CD4-positive, alpha-beta T cell (primary cell): ENCODE measurements at regions of chr11 and their contacts with region 1.

Region 1: DNA sequence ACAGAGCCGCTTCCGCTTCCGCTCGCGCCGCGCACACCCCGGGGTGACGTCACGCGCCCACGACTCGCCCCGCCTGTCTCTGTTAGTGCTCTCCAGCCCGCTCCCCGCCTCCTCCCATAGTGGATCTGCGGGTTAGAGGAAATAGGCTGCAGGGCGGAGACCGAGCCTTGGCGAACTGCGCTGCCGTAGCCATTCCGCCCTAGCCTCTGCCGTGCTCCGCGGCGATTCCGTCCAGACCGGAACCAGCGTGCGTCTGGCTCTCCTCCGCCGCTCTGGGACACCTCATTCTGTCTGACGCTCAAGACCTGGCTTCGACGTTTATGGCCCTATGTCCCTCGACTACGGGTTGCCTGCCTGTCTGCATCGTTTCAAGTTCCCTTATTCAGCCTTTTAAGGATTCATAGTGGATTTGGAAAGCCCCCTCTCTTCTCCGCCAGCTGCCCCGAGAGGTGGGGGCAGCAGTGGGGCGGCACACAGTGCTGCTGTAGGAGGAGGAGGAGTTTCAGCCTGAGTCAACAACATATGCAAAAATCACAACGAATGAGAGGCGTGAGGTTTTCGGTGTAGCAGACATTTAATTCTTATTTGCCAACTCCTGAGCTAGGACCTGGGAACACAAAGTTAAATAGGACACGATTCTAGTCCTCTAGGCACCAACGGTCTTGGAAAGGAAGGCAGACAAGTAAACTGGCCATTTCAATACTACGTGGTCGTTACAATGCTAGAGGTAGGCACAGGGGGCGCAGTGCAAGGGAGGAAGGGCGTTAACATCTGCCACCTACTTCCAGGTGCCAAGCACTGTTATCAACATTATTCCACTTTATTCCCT is at the start of gene TAF10:
- DNase-seq: peak; percentile 88 to 98 (median 95)
- ATAC-seq: peak; percentile 86
- H3K4me3 ChIP-seq: peak within 1 kb of the TSS; percentile 90
- H3K4me3 Mint-ChIP-seq: peak within 1 kb of the TSS; percentile 92
- H3K27ac ChIP-seq: peak within 1 kb of the TSS; percentile 96 to 98
- H3K27ac Mint-ChIP-seq: no peak within 1 kb of the TSS
- H3K4me1 ChIP-seq: peaks cover 63% of the 10 kb centered on the region
- H3K4me1 Mint-ChIP-seq: peaks cover 35% of the 10 kb centered on the region
- H3K27me3 ChIP-seq: no peaks in the 10 kb centered on the region
- H3K27me3 Mint-ChIP-seq: no peaks in the 10 kb centered on the region
- CTCF ChIP-seq: peak; percentile 47
- total RNA-seq, gene TAF10: 154 to 164 TPM

Region 2: DNA sequence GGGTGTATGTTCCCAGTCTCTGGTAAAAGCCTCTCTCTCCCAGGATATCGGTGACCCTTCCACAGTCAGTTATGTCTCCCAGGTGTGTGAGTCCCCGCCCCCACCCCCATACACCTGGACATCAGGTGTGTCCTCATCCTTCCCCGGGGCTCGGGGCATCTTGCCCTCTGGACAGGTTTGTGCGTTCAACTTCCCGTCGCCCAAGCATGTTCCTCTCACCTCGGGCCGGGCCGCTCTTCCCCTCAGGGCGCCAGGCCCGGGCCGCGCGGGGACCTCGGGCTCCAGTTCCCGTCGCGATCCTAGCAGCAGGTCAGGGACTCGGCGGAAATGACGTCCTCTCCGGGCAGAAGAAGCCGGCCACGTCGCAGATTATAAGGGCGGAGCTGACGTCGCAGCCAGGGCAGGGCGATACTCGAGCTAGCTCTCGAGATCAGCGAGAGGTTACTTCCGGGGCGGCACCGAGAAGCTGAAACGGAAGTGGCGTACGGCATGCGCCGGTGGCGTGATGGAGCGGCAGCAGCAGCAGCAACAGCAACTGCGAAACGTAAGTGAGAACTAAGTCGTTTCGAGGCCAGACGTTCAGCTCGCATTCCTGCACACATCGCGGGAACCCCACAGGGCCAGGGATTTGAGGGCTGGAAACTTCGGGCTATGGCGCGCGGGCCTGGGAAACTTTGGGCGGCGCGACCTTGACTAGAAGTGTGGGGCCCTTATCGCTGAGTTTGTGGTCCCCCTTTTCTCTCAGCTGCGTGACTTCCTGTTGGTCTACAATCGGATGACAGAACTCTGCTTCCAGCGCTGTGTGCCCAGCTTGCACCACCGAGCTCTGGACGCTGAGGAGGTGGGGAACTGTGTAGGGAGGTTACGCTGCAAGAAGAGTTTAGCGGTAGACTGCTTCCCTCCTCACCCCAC is 131.2 kb before region 1 on chr11 and contains the starts of genes ARFIP2 and TIMM10B:
- CTCF ChIA-PET with region 1: interaction called, 6 read pairs
- POLR2A ChIA-PET with region 1: interaction called, 27 read pairs
- intact Hi-C with region 1: loop called in 1 of 2 experiments (anchors 5 kb)
- DNase-seq: peak; percentile 92 to 99 (median 96)
- ATAC-seq: peak; percentile 94
- H3K4me3 ChIP-seq: peak within 1 kb of the TSS; percentile 83
- H3K4me3 Mint-ChIP-seq: peak within 1 kb of the TSS; percentile 98
- H3K27ac ChIP-seq: peak within 1 kb of the TSS; percentile 87 to 95
- H3K27ac Mint-ChIP-seq: peak within 1 kb of the TSS; percentile 99
- H3K4me1 ChIP-seq: peaks cover 39% of the 10 kb centered on the region
- H3K4me1 Mint-ChIP-seq: peaks cover 42% of the 10 kb centered on the region
- H3K27me3 ChIP-seq: no peaks in the 10 kb centered on the region
- H3K27me3 Mint-ChIP-seq: no peaks in the 10 kb centered on the region
- CTCF ChIP-seq: no peak
- total RNA-seq, gene ARFIP2: 78.1 to 80.5 TPM
- total RNA-seq, gene TIMM10B: 68.5 to 68.6 TPM

Region 3: GRCh38 chr11:6586434-6587359 is 25.7 kb before region 1 on chr11:
- CTCF ChIA-PET with region 1: no interaction called
- POLR2A ChIA-PET with region 1: no interaction called
- intact Hi-C with region 1: no loop called
- DNase-seq: no peak
- ATAC-seq: no peak
- H3K4me3 ChIP-seq: no peak overlapping the region
- H3K4me3 Mint-ChIP-seq: no peak overlapping the region
- H3K27ac ChIP-seq: no peak overlapping the region
- H3K27ac Mint-ChIP-seq: no peak overlapping the region
- H3K4me1 ChIP-seq: no peaks in the 10 kb centered on the region
- H3K4me1 Mint-ChIP-seq: no peaks in the 10 kb centered on the region
- H3K27me3 ChIP-seq: no peaks in the 10 kb centered on the region
- H3K27me3 Mint-ChIP-seq: no peaks in the 10 kb centered on the region
- CTCF ChIP-seq: no peak

Region 4: DNA sequence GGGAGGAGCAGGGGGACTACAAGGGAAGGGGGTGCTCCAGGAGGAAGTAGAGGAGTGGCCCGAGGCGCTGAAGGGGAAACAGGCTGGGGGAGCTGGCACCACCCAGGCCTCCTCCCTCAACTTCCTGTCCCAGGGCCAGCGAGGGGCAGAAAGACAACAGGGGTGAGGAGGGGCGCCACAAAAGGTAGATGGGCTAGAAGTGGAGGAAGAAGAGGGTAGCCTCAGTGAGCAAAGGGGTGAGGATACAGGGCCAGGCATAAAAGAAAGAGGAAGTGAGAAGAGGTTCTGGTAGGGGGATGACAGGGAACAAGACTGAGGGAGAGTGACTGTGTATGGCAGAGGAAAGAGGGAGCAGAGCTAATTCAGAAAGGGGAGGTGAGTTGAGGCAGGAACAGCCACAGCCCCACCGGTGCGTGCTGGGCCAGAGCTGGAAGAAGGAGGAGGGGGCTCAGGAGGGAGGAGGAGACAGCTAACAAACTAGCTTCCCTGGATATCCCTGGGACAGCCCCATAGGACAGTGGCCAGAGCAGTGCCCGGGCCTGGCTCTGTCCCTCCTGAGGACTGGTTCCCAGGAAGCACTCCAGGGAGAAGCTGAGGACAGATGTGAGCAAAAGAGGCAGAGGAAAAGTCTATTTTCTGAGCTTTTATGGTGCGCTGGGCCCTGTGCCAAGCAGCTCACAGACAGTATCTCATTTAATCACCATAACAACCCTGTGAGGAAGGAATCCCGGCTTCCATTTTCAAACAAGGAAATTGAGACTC is 34.7 kb after region 1 on chr11:
- CTCF ChIA-PET with region 1: interaction called, 3 read pairs
- POLR2A ChIA-PET with region 1: interaction called, 40 read pairs
- intact Hi-C with region 1: no loop called
- DNase-seq: peak in 9 of 14 experiments; percentile 18 to 64 (median 42)
- ATAC-seq: peak; percentile 70
- H3K4me3 ChIP-seq: peak overlapping the region; percentile 22
- H3K4me3 Mint-ChIP-seq: no peak overlapping the region
- H3K27ac ChIP-seq: peak overlapping the region; percentile 72 to 76
- H3K27ac Mint-ChIP-seq: no peak overlapping the region
- H3K4me1 ChIP-seq: peaks cover 52% of the 10 kb centered on the region
- H3K4me1 Mint-ChIP-seq: no peaks in the 10 kb centered on the region
- H3K27me3 ChIP-seq: no peaks in the 10 kb centered on the region
- H3K27me3 Mint-ChIP-seq: no peaks in the 10 kb centered on the region
- CTCF ChIP-seq: no peak

Region 5: GRCh38 chr11:6674862-6675261 is 62.4 kb after region 1 on chr11:
- CTCF ChIA-PET with region 1: no interaction called
- POLR2A ChIA-PET with region 1: interaction called, 134 read pairs
- intact Hi-C with region 1: no loop called
- DNase-seq: no peak
- ATAC-seq: no peak
- H3K4me3 ChIP-seq: no peak overlapping the region
- H3K4me3 Mint-ChIP-seq: no peak overlapping the region
- H3K27ac ChIP-seq: no peak overlapping the region
- H3K27ac Mint-ChIP-seq: no peak overlapping the region
- H3K4me1 ChIP-seq: peaks cover 33% of the 10 kb centered on the region
- H3K4me1 Mint-ChIP-seq: peaks cover 58% of the 10 kb centered on the region
- H3K27me3 ChIP-seq: no peaks in the 10 kb centered on the region
- H3K27me3 Mint-ChIP-seq: no peaks in the 10 kb centered on the region
- CTCF ChIP-seq: no peak